ENCODE measurements at regions of chr3 and their contacts with region 1.

Region 1: DNA sequence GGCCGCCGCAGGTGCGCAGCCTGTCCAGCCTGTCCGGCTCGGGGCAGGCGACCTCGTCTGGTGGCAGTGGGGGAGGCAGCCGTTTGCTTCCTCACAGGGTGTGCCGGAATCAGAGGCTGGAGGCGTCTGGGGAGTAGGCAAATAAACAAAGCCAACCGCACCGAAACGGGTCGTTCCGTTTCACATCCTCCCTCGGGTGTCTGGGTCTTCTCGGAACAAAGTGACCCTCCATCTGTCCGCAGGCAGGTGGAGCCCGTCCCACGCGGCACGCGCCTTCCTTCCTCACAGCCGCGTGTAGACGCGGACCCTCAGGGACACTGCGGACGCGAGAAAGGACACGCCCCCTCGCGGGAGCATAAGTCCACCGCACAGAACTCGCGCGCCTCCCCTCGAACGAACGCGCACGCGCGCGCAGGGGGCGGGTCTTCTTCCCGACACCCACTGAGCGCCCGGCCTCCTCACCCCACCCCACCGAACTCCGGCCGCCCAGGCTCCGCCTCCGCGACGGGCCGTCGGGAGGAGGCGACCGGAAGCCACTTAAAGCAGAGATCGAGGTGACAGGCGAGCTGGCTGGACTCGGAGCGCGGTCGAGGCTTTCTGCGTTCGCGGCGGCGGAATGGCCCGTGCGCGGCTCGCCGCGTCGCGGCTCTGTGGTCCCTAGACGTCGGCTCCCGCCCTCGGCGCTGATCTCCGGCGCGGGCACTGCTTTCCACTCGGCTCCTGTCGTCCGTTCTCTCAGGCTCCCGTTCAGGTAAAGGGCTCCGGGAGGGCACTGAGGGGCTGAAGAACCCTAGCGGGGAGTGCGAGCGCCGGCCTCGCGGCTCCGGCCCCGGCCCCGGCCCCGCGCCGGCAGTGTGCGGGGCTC is at the start of gene TIPARP:
- DNase-seq: peak; percentile 100
- ATAC-seq: peak; percentile 81
- H3K4me3 ChIP-seq: peak within 1 kb of the TSS; percentile 80 to 96 (median 81)
- H3K4me3 Mint-ChIP-seq: peak within 1 kb of the TSS; percentile 91
- H3K27ac ChIP-seq: peak within 1 kb of the TSS; percentile 86 to 94
- H3K27ac Mint-ChIP-seq: peak within 1 kb of the TSS; percentile 99
- H3K4me1 ChIP-seq: peaks cover 25 to 30% of the 10 kb centered on the region in 2 donors
- H3K4me1 Mint-ChIP-seq: peaks cover 47% of the 10 kb centered on the region
- H3K27me3 ChIP-seq: no peaks in the 10 kb centered on the region
- H3K27me3 Mint-ChIP-seq: no peaks in the 10 kb centered on the region
- CTCF ChIP-seq: peak; percentile 83
- total RNA-seq, gene TIPARP: 40.9 and 42.5 TPM in 2 replicates

Region 2: DNA sequence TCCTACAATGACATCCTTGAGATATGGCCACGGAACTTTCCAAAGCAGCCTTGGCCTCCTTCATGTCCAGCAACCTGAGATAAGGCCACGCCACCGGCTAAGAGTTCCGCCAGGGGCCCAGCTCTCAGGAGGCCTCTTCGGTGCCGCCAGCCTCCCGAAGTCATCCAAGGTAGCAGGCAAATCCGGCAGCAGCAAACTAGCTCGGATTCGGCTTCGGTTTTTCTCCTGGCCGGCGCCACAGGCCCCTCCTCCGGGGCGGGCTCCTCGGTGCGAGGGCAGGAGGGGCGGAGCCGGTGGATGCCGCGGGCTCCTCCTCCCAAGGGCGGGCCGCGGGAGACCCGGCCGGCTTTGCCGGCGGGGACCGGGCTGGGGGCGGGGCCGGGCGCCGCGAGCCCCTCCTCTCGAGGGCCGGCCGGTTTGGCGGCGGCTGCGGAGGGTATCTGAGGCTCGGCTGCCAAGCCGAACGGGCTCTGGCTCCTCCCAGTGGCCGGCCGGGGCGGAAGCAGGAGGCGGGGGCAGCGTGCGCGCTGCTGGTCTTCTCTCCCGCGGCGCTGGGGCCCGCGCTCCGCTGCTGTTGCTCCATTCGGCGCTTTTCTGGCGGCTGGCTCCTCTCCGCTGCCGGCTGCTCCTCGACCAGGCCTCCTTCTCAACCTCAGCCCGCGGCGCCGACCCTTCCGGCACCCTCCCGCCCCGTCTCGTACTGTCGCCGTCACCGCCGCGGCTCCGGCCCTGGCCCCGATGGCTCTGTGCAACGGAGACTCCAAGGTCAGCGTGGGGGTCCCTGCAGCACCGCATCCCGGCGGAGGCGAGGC is 803.9 kb before region 1 on chr3 and contains the start of gene GMPS:
- CTCF ChIA-PET with region 1: no interaction called
- POLR2A ChIA-PET with region 1: no interaction called
- intact Hi-C with region 1: loop called (anchors 2 kb)
- DNase-seq: peak; percentile 96
- ATAC-seq: peak; percentile 95
- H3K4me3 ChIP-seq: peak within 1 kb of the TSS; percentile 65 to 95 (median 93)
- H3K4me3 Mint-ChIP-seq: peak within 1 kb of the TSS; percentile 96
- H3K27ac ChIP-seq: peak within 1 kb of the TSS; percentile 75 to 86
- H3K27ac Mint-ChIP-seq: peak within 1 kb of the TSS; percentile 94
- H3K4me1 ChIP-seq: peaks cover 14 to 19% of the 10 kb centered on the region in 2 donors
- H3K4me1 Mint-ChIP-seq: peaks cover 23% of the 10 kb centered on the region
- H3K27me3 ChIP-seq: no peaks in the 10 kb centered on the region
- H3K27me3 Mint-ChIP-seq: no peaks in the 10 kb centered on the region
- CTCF ChIP-seq: peak; percentile 45
- total RNA-seq, gene GMPS: 28.0 and 30.8 TPM in 2 replicates

Region 3: GRCh38 chr3:156542715-156543555 is 131.3 kb before region 1 on chr3:
- CTCF ChIA-PET with region 1: interaction called, 10 read pairs
- POLR2A ChIA-PET with region 1: no interaction called
- intact Hi-C with region 1: no loop called
- DNase-seq: no peak
- ATAC-seq: no peak
- H3K4me3 ChIP-seq: no peak overlapping the region
- H3K4me3 Mint-ChIP-seq: no peak overlapping the region
- H3K27ac ChIP-seq: no peak overlapping the region
- H3K27ac Mint-ChIP-seq: no peak overlapping the region
- H3K4me1 ChIP-seq: no peaks in the 10 kb centered on the region
- H3K4me1 Mint-ChIP-seq: no peaks in the 10 kb centered on the region
- H3K27me3 ChIP-seq: no peaks in the 10 kb centered on the region
- H3K27me3 Mint-ChIP-seq: no peaks in the 10 kb centered on the region
- CTCF ChIP-seq: no peak

Region 4: GRCh38 chr3:156826144-156826895 is 152.0 kb after region 1 on chr3 and contains the start of gene LEKR1:
- CTCF ChIA-PET with region 1: interaction called, 3 read pairs
- POLR2A ChIA-PET with region 1: no interaction called
- intact Hi-C with region 1: loop called (anchors 2 kb)
- DNase-seq: peak; percentile 80
- ATAC-seq: peak; percentile 73
- H3K4me3 ChIP-seq: peak within 1 kb of the TSS; percentile 72 to 87 (median 77)
- H3K4me3 Mint-ChIP-seq: peak within 1 kb of the TSS; percentile 93
- H3K27ac ChIP-seq: peak within 1 kb of the TSS; percentile 82 to 97
- H3K27ac Mint-ChIP-seq: peak within 1 kb of the TSS; percentile 96
- H3K4me1 ChIP-seq: peaks cover 12 to 14% of the 10 kb centered on the region in 2 donors
- H3K4me1 Mint-ChIP-seq: peaks cover 24% of the 10 kb centered on the region
- H3K27me3 ChIP-seq: no peaks in the 10 kb centered on the region
- H3K27me3 Mint-ChIP-seq: no peaks in the 10 kb centered on the region
- CTCF ChIP-seq: no peak
- total RNA-seq, gene LEKR1: 4.6 and 4.7 TPM in 2 replicates

Region 5: GRCh38 chr3:157088601-157089454 is 414.6 kb after region 1 on chr3:
- CTCF ChIA-PET with region 1: interaction called, 30 read pairs
- POLR2A ChIA-PET with region 1: interaction called, 23 read pairs
- intact Hi-C with region 1: loop called (anchors 1 kb)
- DNase-seq: peak; percentile 96
- ATAC-seq: peak; percentile 91
- H3K4me3 ChIP-seq: peak overlapping the region; percentile 56 to 92 (median 80)
- H3K4me3 Mint-ChIP-seq: peak overlapping the region; percentile 94
- H3K27ac ChIP-seq: peak overlapping the region; percentile 76 to 98
- H3K27ac Mint-ChIP-seq: peak overlapping the region; percentile 98
- H3K4me1 ChIP-seq: peaks cover 19 to 25% of the 10 kb centered on the region in 2 donors
- H3K4me1 Mint-ChIP-seq: peaks cover 25% of the 10 kb centered on the region
- H3K27me3 ChIP-seq: peaks cover 0 to 2% (median 0%) of the 10 kb centered on the region in 4 experiments
- H3K27me3 Mint-ChIP-seq: peaks cover 8% of the 10 kb centered on the region
- CTCF ChIP-seq: no peak

Region 6: DNA sequence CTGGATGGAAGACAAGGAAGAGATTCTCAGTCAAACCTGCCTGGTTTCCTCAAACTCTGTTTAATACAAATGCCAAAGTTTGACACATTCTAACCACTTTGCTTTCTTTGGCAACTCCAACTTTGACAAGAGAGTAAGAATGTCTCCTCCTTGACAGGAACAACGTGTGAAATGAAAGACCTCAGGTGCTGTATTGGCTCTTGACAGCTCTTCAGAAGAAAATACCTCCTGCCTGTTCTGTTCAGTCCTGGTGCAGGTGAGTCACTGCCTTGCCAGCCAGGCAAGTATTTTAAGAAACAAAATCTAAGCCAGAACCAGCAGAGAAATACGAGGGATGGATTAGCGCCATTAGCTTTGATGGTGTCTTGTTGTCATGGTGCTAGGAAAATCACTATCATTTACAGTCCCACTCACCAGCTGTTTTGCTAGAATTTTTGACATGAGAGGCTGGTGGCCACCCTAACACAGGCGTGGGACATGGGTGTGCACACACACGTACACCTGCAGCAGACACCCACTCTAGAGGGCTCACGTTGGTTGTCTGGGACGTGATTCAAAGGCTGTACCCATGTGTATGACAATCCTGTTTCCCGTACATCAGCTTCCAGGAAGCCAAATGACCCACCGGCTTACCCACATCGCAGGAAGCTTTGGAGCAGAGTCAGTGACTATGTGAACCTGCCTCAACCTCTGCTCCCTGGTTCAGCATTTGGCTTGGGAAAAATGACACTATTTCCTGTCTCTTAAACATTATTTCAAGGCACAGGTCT is 425.2 kb after region 1 on chr3:
- CTCF ChIA-PET with region 1: no interaction called
- POLR2A ChIA-PET with region 1: no interaction called
- intact Hi-C with region 1: no loop called
- DNase-seq: no peak
- ATAC-seq: no peak
- H3K4me3 ChIP-seq: no peak overlapping the region
- H3K4me3 Mint-ChIP-seq: no peak overlapping the region
- H3K27ac ChIP-seq: no peak overlapping the region
- H3K27ac Mint-ChIP-seq: no peak overlapping the region
- H3K4me1 ChIP-seq: peaks cover 15 to 17% of the 10 kb centered on the region in 2 donors
- H3K4me1 Mint-ChIP-seq: peaks cover 16% of the 10 kb centered on the region
- H3K27me3 ChIP-seq: peaks cover 0 to 4% (median 0%) of the 10 kb centered on the region in 4 experiments
- H3K27me3 Mint-ChIP-seq: peaks cover 4% of the 10 kb centered on the region
- CTCF ChIP-seq: no peak

Region 7: DNA sequence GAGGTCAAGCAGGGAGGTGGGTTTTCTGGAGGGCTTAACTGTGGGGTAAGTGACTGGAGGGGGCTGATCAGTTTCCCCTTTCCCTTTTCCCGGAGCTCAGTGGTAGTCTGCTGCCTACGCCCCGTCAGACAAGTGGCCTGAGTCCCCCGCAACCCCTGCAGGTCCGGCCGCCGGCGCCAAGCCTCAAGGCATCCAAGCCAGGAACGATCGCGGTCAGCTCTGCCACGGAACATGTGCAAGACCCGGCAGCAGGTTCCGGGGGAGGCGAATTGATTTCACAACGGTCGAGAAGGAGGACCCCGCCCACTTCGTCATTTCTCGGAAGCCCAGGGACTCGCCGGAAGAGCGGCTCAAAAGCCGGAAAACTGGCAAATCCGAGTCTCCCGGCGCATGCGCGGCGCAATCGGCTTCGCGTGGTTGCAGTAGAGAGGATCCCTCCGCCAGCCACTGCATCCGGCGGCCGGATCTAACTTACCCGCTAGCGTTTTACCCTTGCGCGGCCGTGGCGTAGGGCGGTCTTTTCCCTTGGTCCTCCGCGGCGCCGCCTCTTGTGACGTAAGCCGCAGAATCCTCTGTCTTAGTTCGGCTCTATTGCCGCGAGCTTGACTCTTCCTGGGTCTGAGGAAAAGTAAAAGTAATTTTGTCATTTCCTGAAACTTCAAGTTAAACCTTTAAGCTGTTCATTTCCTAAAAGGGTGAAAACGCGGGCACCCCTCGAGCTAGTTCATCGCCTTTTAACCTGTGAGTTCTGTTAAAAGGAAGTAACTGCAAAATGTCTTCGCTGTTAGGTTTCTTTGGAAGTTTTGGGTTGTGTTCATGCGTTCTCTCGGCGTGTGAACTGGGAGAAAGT is 500.6 kb after region 1 on chr3:
- CTCF ChIA-PET with region 1: interaction called, 4 read pairs
- POLR2A ChIA-PET with region 1: interaction called, 4 read pairs
- intact Hi-C with region 1: loop called (anchors 1 kb)
- DNase-seq: peak; percentile 99
- ATAC-seq: peak; percentile 91
- H3K4me3 ChIP-seq: peak overlapping the region; percentile 85 to 98 (median 93)
- H3K4me3 Mint-ChIP-seq: peak overlapping the region; percentile 91
- H3K27ac ChIP-seq: peak overlapping the region; percentile 89 to 97
- H3K27ac Mint-ChIP-seq: peak overlapping the region; percentile 97
- H3K4me1 ChIP-seq: peaks cover 19% of the 10 kb centered on the region in 2 donors
- H3K4me1 Mint-ChIP-seq: peaks cover 23% of the 10 kb centered on the region
- H3K27me3 ChIP-seq: no peaks in the 10 kb centered on the region
- H3K27me3 Mint-ChIP-seq: no peaks in the 10 kb centered on the region
- CTCF ChIP-seq: no peak

Measured in B cell (primary cell).